GM18951 (cell line): ENCODE measurements at regions of chr9 and their contacts with region 1.

Region 1: GRCh38 chr9:967903-968641 is 8.4 kb upstream of the DMRT3 start:
- POLR2A ChIP-seq: no peak

Region 2: DNA sequence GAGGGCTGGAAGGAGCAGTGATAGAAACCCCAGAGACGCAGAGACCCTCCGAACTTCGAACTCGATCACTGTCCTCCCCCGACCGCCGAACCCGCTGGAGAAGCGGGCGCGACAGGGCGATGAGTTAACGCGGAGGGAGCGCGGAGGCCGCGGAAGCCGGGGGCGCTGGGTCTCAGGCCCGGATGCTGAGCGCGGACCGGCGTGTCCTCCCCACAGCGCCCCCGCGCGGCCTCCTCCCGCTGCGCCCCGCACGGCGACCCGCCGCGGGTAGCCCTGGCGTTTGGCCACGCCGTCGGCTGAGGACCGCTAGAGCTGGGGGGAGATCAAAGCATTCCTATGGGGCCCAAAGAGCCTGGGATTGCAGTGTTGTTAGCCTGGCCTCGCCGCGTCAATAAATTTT is 74.4 kb after region 1 on chr9:
- in situ Hi-C with region 1: loop called (anchors 10 kb)
- POLR2A ChIP-seq: no peak